ENCODE measurements at regions of chr6 and their contacts with region 1.

Region 1: GRCh38 chr6:22804620-22805261 is 235.4 kb downstream of the HDGFL1 start:
- DNase-seq: no peak
- H3K4me3 Mint-ChIP-seq: no peak overlapping the region
- H3K27ac Mint-ChIP-seq: no peak overlapping the region
- H3K4me1 Mint-ChIP-seq: no peaks in the 10 kb centered on the region
- H3K27me3 Mint-ChIP-seq: no peaks in the 10 kb centered on the region
- CTCF ChIP-seq: no peak

Region 2: GRCh38 chr6:22499815-22500214 is 304.9 kb before region 1 on chr6:
- CTCF ChIA-PET with region 1: no interaction called
- POLR2A ChIA-PET with region 1: no interaction called
- intact Hi-C with region 1: no loop called
- DNase-seq: no peak
- H3K4me3 Mint-ChIP-seq: no peak overlapping the region
- H3K27ac Mint-ChIP-seq: no peak overlapping the region
- H3K4me1 Mint-ChIP-seq: no peaks in the 10 kb centered on the region
- H3K27me3 Mint-ChIP-seq: no peaks in the 10 kb centered on the region
- CTCF ChIP-seq: no peak

Region 3: GRCh38 chr6:22613695-22614094 is 191.0 kb before region 1 on chr6:
- CTCF ChIA-PET with region 1: no interaction called
- POLR2A ChIA-PET with region 1: no interaction called
- intact Hi-C with region 1: loop called (anchors 5 kb)
- DNase-seq: no peak
- H3K4me3 Mint-ChIP-seq: no peak overlapping the region
- H3K27ac Mint-ChIP-seq: no peak overlapping the region
- H3K4me1 Mint-ChIP-seq: no peaks in the 10 kb centered on the region
- H3K27me3 Mint-ChIP-seq: no peaks in the 10 kb centered on the region
- CTCF ChIP-seq: no peak